IMR-90 (cell line): ENCODE measurements at regions of chr4 and their contacts with region 1.

Region 1: DNA sequence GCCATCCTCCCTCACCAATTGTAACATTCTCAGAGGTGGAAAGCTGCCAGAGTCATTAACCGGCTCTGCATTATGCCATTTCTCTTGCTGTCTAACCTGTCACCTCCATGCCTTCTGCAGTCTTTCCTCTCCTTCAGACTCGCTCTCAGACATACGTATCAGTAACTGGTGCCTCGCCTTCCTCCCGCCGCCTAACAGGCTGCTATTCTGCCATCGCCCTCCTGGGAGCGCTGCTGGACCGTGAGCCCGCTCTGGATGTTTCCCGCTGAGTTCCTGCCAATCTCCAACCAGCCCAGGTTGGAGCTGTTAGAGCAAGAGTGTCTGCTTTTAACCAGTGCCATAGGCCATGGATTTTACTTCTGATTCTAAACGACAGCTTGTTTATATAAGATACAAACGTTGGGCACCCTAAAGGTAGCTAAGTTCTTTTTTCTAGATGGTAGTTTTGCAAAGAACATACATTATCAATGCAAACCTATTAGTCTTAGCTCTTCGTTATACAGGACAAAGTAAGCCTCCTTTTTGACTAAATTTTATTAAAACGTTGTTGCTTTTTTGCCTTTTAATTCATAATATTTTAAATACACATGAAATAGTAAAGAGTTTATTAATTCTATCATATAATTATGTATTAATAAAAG is 59.5 kb upstream of the NEIL3 start:
- DNase-seq: peak; percentile 60
- ATAC-seq: peak; percentile 96
- H3K4me3 ChIP-seq: no peak overlapping the region
- H3K27ac ChIP-seq: no peak overlapping the region
- H3K4me1 ChIP-seq: no peaks in the 10 kb centered on the region; the same call in 1 of the 2 replicates
- H3K27me3 ChIP-seq: no peaks in the 10 kb centered on the region
- CTCF ChIP-seq: peak; percentile 93
- POLR2A ChIP-seq: no peak; the same call in 1 of the 2 replicates
- RAD21 ChIP-seq: peak; percentile 98

Region 2: GRCh38 chr4:177047070-177047850 is 202.9 kb before region 1 on chr4:
- CTCF ChIA-PET with region 1: interaction called, 3 read pairs
- POLR2A ChIA-PET with region 1: no interaction called
- dilution Hi-C with region 1: no loop called
- in situ Hi-C with region 1: no loop called
- intact Hi-C with region 1: loop called (anchors 10 kb)
- DNase-seq: peak; percentile 81
- ATAC-seq: peak; percentile 99
- H3K4me3 ChIP-seq: no peak overlapping the region
- H3K27ac ChIP-seq: no peak overlapping the region
- H3K4me1 ChIP-seq: no peaks in the 10 kb centered on the region
- H3K27me3 ChIP-seq: no peaks in the 10 kb centered on the region
- CTCF ChIP-seq: peak; percentile 82
- POLR2A ChIP-seq: 0 out of 2 replicates have a peak, but pooled peaks have one; percentile 25
- RAD21 ChIP-seq: peak; percentile 96

Region 3: GRCh38 chr4:177297785-177298391 is 47.7 kb after region 1 on chr4:
- CTCF ChIA-PET with region 1: no interaction called
- POLR2A ChIA-PET with region 1: no interaction called
- dilution Hi-C with region 1: no loop called
- in situ Hi-C with region 1: no loop called
- intact Hi-C with region 1: no loop called
- DNase-seq: no peak
- ATAC-seq: no peak
- H3K4me3 ChIP-seq: no peak overlapping the region
- H3K27ac ChIP-seq: no peak overlapping the region
- H3K4me1 ChIP-seq: peaks cover 7% of the 10 kb centered on the region
- H3K27me3 ChIP-seq: no peaks in the 10 kb centered on the region
- CTCF ChIP-seq: no peak
- POLR2A ChIP-seq: no peak
- RAD21 ChIP-seq: no peak

Region 4: GRCh38 chr4:177309522-177310371 is 59.6 kb after region 1 on chr4 and contains the start of gene NEIL3:
- CTCF ChIA-PET with region 1: interaction called, 16 read pairs
- POLR2A ChIA-PET with region 1: no interaction called
- dilution Hi-C with region 1: no loop called
- in situ Hi-C with region 1: no loop called
- intact Hi-C with region 1: no loop called
- DNase-seq: peak; percentile 79
- ATAC-seq: peak; percentile 88
- H3K4me3 ChIP-seq: peak within 1 kb of the TSS; percentile 87
- H3K27ac ChIP-seq: peak within 1 kb of the TSS; percentile 45
- H3K4me1 ChIP-seq: peaks cover 6% of the 10 kb centered on the region
- H3K27me3 ChIP-seq: no peaks in the 10 kb centered on the region
- CTCF ChIP-seq: no peak
- POLR2A ChIP-seq: no peak
- RAD21 ChIP-seq: no peak
- total RNA-seq, gene NEIL3: 7.9 and 10.3 TPM in 2 replicates

Region 5: DNA sequence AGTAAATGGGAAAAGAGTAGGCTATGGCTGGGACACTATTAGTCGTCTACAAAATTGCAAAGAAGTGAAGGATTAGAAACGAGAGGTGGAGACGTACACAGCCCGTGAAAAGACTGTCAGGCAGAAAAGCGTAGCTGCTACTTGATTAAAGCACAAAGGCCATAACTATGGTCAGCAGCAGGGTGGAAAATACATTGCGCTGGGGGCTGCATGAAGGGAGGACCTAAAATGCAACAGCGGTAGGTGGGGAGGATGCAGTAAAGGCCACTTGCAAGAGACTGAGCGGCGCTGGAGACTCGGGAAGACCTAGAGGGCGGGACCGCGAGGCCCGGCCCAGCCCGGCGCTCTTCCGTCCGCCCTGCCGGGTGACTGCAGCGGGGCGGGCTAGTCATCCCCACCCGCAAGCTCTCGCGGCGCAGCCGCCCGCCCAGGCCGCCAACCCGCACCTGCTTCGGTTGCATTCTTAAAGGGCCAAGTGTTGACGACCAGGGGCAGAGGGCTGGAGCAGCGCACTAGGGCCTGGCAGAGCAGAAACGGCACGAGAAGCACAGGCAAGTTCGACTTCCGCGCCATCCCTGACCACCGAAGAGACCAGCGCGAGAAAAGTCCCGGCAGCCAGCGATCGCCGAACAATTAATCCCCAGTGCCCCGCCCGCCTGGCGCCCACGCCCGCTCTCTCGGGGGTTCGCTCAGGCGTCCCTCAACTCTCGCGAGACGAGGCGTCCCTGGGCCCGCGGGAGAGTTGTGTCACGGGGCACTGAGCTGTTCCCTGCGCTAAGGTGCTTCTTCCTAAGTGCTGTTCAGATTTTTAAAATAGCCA is 191.8 kb after region 1 on chr4 and contains the start of gene AGA:
- CTCF ChIA-PET with region 1: no interaction called
- POLR2A ChIA-PET with region 1: no interaction called
- dilution Hi-C with region 1: no loop called
- in situ Hi-C with region 1: no loop called
- intact Hi-C with region 1: loop called (anchors 5 kb)
- DNase-seq: peak; percentile 93
- ATAC-seq: peak; percentile 98
- H3K4me3 ChIP-seq: peak within 1 kb of the TSS; percentile 87
- H3K27ac ChIP-seq: peak within 1 kb of the TSS; percentile 94
- H3K4me1 ChIP-seq: peaks cover 9% of the 10 kb centered on the region; the same call in 1 of the 2 replicates
- H3K27me3 ChIP-seq: no peaks in the 10 kb centered on the region
- CTCF ChIP-seq: no peak
- POLR2A ChIP-seq: peak; percentile 74; the same call in 1 of the 2 replicates
- RAD21 ChIP-seq: no peak; the same call in 1 of the 2 replicates
- total RNA-seq, gene AGA: 35.8 and 38.5 TPM in 2 replicates

Region 6: GRCh38 chr4:177879851-177880250 is 629.7 kb after region 1 on chr4:
- CTCF ChIA-PET with region 1: no interaction called
- POLR2A ChIA-PET with region 1: no interaction called
- dilution Hi-C with region 1: no loop called
- in situ Hi-C with region 1: no loop called
- intact Hi-C with region 1: loop called (anchors 10 kb)
- DNase-seq: no peak
- ATAC-seq: no peak
- H3K4me3 ChIP-seq: no peak overlapping the region
- H3K27ac ChIP-seq: no peak overlapping the region
- H3K4me1 ChIP-seq: no peaks in the 10 kb centered on the region
- H3K27me3 ChIP-seq: no peaks in the 10 kb centered on the region
- CTCF ChIP-seq: no peak
- POLR2A ChIP-seq: no peak
- RAD21 ChIP-seq: no peak